Activated B cell treated with CpG ODN at 0.5 μM for 24 hours (primary cell): ENCODE measurements at regions of chr16 and their contacts with region 1.

Region 1: DNA sequence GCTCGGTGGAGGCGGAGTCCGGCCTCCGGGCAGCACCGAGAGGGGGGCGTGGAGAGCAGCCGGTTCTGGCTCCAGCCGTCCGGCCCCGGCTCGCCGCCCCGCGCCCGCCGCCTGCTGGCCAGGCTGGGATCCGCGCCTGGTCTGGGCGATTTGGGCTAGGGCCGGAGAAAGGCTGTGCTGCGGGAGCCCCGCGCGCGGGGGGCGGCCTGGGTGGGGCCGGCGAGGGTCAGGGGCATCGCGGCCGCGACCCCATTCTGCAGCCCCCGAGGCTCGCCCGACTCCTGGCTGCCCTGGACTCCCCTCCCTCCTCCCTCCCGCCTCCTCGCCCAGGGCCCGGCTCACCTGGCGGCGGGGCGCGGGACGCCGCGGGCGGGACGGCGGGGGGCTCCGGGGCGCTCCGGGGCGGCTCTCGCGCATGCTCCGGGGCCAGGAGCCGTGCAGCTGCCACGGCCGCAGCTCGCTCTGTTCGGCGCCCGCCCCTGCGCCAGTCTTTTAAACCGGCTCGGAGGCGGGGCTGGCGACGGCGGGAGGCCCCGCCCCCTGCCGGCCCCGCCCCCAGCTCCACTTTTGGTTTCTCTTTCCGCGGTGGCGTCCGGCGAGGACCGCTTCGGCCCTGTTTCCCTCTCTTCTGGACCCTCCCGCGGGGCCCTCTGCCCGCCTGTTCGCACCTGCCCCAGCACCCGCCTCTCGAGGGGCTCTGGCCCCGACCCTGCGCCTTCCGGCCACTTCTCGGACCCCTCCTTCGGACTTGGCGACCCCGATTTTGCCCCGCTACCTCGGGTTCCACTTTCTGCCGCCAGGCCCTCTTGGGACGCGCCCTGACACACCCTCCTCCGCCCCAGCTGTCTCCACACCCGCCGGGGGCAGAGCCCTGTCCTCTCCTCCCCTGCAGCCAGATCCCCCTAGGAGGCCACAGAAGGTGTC is at the start of gene SOCS1:
- DNase-seq: peak; percentile 92
- ATAC-seq: peak; percentile 71
- H3K4me3 Mint-ChIP-seq: peak within 1 kb of the TSS; percentile 98
- H3K27ac Mint-ChIP-seq: peak within 1 kb of the TSS; percentile 98
- H3K4me1 Mint-ChIP-seq: peaks cover 60% of the 10 kb centered on the region
- H3K27me3 Mint-ChIP-seq: no peaks in the 10 kb centered on the region
- CTCF ChIP-seq: peak; percentile 46
- total RNA-seq, gene SOCS1: 68.6 and 76.2 TPM in 2 replicates

Region 2: GRCh38 chr16:10949370-10949970 is 306.5 kb before region 1 on chr16:
- CTCF ChIA-PET with region 1: interaction called, 4 read pairs
- POLR2A ChIA-PET with region 1: interaction called, 35 read pairs
- intact Hi-C with region 1: no loop called
- DNase-seq: peak; percentile 74
- ATAC-seq: peak; percentile 95
- H3K4me3 Mint-ChIP-seq: peak overlapping the region; percentile 75
- H3K27ac Mint-ChIP-seq: peak overlapping the region; percentile 94
- H3K4me1 Mint-ChIP-seq: peaks cover 70% of the 10 kb centered on the region
- H3K27me3 Mint-ChIP-seq: no peaks in the 10 kb centered on the region
- CTCF ChIP-seq: no peak

Region 3: GRCh38 chr16:11036040-11036439 is 220.0 kb before region 1 on chr16:
- CTCF ChIA-PET with region 1: no interaction called
- POLR2A ChIA-PET with region 1: interaction called, 11 read pairs
- intact Hi-C with region 1: no loop called
- DNase-seq: no peak
- ATAC-seq: no peak
- H3K4me3 Mint-ChIP-seq: no peak overlapping the region
- H3K27ac Mint-ChIP-seq: no peak overlapping the region
- H3K4me1 Mint-ChIP-seq: no peaks in the 10 kb centered on the region
- H3K27me3 Mint-ChIP-seq: no peaks in the 10 kb centered on the region
- CTCF ChIP-seq: no peak

Region 4: DNA sequence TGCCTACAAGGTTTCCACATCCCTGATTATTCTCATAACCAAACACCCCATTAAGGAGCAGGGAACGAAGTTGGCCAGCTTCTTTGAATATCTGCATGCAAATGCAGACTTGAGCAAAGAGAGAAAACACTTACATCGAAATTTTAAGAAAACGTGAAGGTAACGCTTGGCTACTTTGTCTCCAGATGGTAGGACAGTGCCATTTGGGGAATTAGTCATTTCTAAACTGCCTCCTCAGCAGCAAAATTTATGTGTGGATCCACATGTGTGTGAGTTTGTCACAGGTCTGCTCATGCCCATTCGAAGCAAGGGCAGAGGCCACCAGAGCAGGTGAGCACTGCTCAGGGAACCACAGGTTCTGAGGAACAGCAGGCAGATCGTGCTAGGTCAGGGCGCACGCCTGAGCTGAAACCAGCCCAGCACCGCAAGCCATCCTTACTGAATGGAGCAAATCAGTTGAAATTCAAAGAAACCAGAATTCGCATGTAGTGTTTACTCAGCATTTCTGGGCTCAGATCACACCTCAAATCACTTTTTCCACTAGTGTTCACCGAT is 80.1 kb before region 1 on chr16:
- CTCF ChIA-PET with region 1: interaction called, 9 read pairs
- POLR2A ChIA-PET with region 1: interaction called, 161 read pairs
- intact Hi-C with region 1: no loop called
- DNase-seq: no peak
- ATAC-seq: peak; percentile 74
- H3K4me3 Mint-ChIP-seq: peak overlapping the region; percentile 42
- H3K27ac Mint-ChIP-seq: peak overlapping the region; percentile 81
- H3K4me1 Mint-ChIP-seq: peaks cover 57% of the 10 kb centered on the region
- H3K27me3 Mint-ChIP-seq: no peaks in the 10 kb centered on the region
- CTCF ChIP-seq: no peak

Region 5: DNA sequence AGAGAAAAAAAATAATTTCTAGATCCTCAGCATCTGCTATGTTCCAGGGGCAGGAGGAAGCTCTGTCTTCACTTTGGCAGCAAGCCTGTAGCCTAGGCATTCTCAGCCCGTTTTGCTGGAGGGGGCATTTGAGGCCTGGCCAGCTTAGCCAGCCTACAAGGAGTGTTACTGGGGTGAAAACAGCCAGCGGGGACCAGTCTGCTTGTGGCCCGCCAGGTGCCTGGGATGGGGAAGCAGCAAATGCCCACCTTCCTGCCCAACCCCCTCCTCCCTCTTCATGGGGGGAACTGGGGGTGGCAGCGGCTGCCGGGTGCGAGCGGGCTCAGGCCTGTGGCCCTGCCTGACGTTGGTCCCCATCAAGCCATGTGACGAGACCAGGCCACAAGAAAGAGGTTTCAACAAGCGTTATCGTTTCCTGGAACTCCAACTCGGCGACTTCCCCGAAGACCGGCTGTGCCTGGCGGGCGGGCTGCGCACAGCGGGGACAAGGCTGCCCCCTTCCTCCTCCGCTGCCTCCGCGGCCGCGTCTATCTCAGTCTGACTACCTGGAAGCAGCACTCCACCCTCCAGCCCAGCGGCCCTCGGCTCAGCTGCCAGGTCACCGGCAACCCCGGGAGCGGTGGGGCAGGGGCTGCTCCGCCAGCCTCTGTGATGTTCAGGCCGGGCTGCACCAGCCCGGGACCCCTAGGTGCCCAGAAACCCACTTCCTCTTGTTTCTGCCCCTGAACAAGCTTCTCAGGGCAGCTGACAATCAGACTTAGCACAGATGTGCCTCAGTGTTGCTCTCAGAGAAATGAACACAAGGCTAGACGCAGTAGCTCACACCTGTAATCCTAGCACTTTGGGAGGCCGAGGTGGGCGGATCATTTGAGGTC is 22.9 kb before region 1 on chr16:
- CTCF ChIA-PET with region 1: interaction called, 5 read pairs
- POLR2A ChIA-PET with region 1: interaction called, 18 read pairs
- intact Hi-C with region 1: loop called (anchors 1 kb)
- DNase-seq: peak; percentile 52
- ATAC-seq: peak; percentile 79
- H3K4me3 Mint-ChIP-seq: peak overlapping the region; percentile 35
- H3K27ac Mint-ChIP-seq: peak overlapping the region; percentile 61
- H3K4me1 Mint-ChIP-seq: peaks cover 46% of the 10 kb centered on the region
- H3K27me3 Mint-ChIP-seq: no peaks in the 10 kb centered on the region
- CTCF ChIP-seq: no peak

Region 6: DNA sequence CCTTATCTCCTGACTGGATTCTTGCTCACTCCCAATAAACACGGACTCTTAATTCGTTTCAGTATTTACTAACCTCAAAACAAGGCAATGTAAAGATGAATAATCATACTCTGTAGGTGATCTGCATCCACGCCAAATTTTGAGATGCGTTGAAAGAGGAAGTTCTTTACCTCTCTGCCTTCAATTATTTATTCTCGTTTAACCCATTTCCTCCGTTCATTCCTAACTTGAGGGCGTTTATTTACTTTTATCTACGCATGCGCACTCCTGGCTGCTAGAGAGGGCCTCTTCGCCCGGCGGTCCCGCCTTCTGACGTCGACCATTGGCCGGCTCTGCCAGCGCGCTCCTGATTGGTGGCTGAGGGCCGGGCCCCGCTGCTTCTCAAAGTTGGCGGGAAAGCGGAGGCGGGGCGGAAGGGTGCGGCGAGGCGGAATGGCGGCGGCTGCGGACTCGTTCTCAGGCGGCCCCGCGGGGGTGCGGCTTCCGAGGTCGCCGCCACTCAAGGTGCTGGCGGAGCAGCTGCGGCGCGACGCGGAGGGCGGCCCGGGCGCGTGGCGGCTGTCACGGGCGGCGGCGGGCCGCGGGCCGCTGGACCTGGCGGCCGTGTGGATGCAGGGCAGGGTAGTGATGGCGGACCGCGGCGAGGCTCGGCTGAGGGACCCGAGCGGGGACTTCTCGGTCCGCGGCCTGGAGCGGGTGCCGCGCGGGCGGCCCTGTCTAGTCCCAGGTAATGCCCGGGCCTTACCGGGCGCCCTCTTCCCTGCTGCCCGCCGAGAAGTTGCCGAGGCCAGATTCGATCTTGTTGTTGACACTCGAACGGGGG is 89.3 kb after region 1 on chr16 and contains the start of gene RMI2:
- CTCF ChIA-PET with region 1: interaction called, 8 read pairs
- POLR2A ChIA-PET with region 1: interaction called, 252 read pairs
- intact Hi-C with region 1: loop called (anchors 1 kb)
- DNase-seq: peak; percentile 92
- ATAC-seq: peak; percentile 100
- H3K4me3 Mint-ChIP-seq: peak within 1 kb of the TSS; percentile 86
- H3K27ac Mint-ChIP-seq: peak within 1 kb of the TSS; percentile 80
- H3K4me1 Mint-ChIP-seq: peaks cover 37% of the 10 kb centered on the region
- H3K27me3 Mint-ChIP-seq: no peaks in the 10 kb centered on the region
- CTCF ChIP-seq: no peak
- total RNA-seq, gene RMI2: 8.1 TPM in 2 replicates

Region 7: GRCh38 chr16:11407047-11407982 is 151.3 kb after region 1 on chr16:
- CTCF ChIA-PET with region 1: interaction called, 9 read pairs
- POLR2A ChIA-PET with region 1: interaction called, 4 read pairs
- intact Hi-C with region 1: loop called (anchors 1 kb)
- DNase-seq: no peak
- ATAC-seq: peak; percentile 74
- H3K4me3 Mint-ChIP-seq: no peak overlapping the region
- H3K27ac Mint-ChIP-seq: no peak overlapping the region
- H3K4me1 Mint-ChIP-seq: no peaks in the 10 kb centered on the region
- H3K27me3 Mint-ChIP-seq: no peaks in the 10 kb centered on the region
- CTCF ChIP-seq: no peak

Region 8: DNA sequence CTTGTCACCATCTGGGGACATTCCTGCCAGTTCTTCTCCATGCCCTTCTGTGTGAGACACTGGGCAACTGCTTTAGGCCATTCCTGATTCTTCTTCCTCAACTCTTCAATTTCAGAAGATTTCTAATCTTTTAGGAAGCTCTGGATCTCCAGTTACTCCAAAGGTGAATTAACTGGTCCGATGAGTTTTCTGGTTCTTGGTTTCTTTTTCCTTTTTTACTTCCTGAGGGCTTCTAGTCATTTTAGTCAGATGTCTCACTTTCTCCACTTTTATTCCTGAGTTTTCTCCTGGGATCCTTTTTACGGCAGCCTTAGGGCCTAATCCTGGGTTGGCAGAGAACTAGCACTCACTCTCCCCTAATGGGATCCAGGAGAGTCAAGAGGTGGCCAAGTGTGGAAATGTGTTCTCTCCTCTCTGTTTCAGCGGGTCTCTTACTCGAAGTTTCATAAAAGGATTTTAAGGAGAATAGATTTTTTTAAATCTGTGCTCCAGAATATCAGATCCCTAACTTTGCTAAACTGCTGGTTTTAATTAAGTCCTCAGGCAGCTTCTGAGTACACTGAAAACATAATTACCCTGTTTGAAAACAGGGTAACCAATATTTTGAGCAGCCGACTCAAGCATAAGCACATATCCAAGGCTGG is 196.9 kb after region 1 on chr16:
- CTCF ChIA-PET with region 1: no interaction called
- POLR2A ChIA-PET with region 1: no interaction called
- intact Hi-C with region 1: no loop called
- DNase-seq: no peak
- ATAC-seq: no peak
- H3K4me3 Mint-ChIP-seq: no peak overlapping the region
- H3K27ac Mint-ChIP-seq: no peak overlapping the region
- H3K4me1 Mint-ChIP-seq: no peaks in the 10 kb centered on the region
- H3K27me3 Mint-ChIP-seq: peaks cover 1% of the 10 kb centered on the region
- CTCF ChIP-seq: no peak